ENCODE measurements at regions of chr10 and their contacts with region 1.

Region 1: GRCh38 chr10:92284112-92284704 is 6.7 kb downstream of the CPEB3 start:
- DNase-seq: no peak
- H3K4me3 ChIP-seq: no peak overlapping the region
- CTCF ChIP-seq: no peak

Region 2: DNA sequence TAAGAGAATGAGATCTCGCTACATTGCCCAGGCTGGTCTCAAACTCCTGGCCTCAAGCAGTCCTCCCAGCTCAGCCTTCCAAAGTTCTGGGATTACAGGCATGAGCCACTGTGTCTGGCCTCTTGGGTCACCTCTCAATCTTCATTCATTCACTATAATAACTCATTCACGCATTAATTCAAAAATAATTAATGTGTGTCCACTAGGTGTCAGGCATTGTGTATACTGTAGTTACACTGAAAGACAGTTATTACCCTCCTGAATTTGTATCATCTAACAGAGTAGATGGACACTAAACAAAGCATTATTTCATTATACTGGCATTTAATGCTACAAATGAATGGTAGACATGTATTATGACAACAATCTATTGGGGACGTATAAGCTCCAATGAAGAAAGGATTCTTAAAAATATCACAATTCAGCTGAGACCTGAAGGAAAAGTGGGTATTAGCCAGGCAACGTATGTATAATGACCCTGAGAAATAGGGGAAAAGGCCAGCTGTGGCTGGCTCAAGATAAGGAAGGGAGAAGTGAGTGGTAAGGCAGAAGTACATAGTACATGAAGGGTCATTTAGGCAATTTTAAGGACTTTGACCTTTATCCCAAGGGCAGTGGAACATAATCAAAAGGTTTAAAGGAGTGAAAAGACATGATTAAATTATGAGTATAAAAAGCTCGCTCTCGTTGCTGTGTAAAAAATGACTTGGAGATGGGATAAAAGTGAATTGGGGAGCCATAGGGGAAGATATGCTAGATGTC is 209.9 kb before region 1 on chr10:
- in situ Hi-C with region 1: loop called (anchors 10 kb)
- DNase-seq: no peak
- H3K4me3 ChIP-seq: no peak overlapping the region
- CTCF ChIP-seq: no peak

Region 3: DNA sequence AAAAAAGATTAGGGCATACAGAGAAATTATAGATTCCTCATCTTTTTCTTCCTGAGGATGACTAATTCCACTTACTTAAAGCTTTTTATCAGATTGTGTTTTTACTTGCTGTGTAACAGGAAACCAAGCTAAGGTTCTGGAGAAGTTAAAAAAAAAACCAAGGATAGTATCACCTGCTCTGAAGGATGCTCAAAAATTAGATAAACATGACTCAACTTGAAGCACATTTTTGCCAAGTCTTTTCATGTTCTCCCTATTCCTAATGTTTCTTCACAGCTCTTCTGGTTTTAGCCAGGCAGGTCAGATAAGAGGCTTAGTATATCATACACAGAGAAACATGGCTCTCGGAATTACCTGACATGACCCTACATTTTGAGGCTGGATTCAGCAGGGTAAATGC is 83.6 kb before region 1 on chr10:
- in situ Hi-C with region 1: no loop called
- DNase-seq: no peak
- H3K4me3 ChIP-seq: no peak overlapping the region
- CTCF ChIP-seq: no peak

Region 4: GRCh38 chr10:92356041-92356440 is 71.8 kb after region 1 on chr10:
- in situ Hi-C with region 1: no loop called
- DNase-seq: no peak
- H3K4me3 ChIP-seq: no peak overlapping the region
- CTCF ChIP-seq: no peak

Measured in astrocyte of the cerebellum (primary cell).